ENCODE measurements at regions of chr6 and their contacts with region 1.

Region 1: DNA sequence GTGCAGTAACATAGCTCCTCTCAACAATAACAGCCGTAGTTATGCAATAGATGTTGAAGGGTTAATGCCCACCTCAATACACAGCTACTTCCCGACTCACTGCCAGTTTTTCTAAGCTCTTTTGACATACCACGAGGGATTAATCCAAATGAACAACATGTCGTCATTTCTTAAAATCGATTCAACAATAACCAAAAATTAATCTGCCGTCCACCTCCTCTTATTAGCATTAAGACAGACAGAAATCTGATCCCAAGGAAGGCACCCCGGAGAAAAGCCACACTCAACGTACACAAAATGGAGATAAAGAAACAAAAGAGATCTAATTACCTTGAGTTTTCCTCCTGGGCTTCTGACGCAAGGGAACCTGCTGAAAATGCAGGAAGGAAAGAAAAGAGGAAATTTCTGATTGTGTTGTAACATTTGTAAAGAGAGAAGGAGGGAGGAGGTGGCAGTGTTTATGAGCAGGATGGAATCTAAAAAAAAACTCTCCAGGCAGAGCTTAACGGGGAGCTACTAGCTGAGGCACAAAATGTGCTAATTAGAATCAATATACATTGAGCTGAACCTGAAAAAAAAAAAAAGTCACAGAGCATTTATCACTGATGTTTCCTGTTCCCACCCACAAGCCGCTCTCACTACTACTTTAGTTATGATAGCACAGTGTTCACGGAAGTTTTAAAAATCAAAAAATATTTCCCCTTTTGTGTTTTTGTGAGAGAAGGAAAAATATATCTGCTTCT is 109.3 kb downstream of the IPCEF1 start:
- DNase-seq: no peak
- H3K4me3 ChIP-seq: no peak overlapping the region
- H3K27ac ChIP-seq: no peak overlapping the region
- H3K4me1 ChIP-seq: no peaks in the 10 kb centered on the region
- H3K27me3 ChIP-seq: no peaks in the 10 kb centered on the region
- CTCF ChIP-seq: no peak

Region 2: GRCh38 chr6:152609188-152609587 is 1638.1 kb before region 1 on chr6:
- CTCF ChIA-PET with region 1: no interaction called
- POLR2A ChIA-PET with region 1: interaction called, 14 read pairs
- intact Hi-C with region 1: no loop called
- DNase-seq: no peak
- H3K4me3 ChIP-seq: no peak overlapping the region
- H3K27ac ChIP-seq: no peak overlapping the region
- H3K4me1 ChIP-seq: no peaks in the 10 kb centered on the region
- H3K27me3 ChIP-seq: no peaks in the 10 kb centered on the region
- CTCF ChIP-seq: no peak